Prostate gland (tissue), 2 donors: ENCODE measurements at regions of chr10 and their contacts with region 1.

Region 1: DNA sequence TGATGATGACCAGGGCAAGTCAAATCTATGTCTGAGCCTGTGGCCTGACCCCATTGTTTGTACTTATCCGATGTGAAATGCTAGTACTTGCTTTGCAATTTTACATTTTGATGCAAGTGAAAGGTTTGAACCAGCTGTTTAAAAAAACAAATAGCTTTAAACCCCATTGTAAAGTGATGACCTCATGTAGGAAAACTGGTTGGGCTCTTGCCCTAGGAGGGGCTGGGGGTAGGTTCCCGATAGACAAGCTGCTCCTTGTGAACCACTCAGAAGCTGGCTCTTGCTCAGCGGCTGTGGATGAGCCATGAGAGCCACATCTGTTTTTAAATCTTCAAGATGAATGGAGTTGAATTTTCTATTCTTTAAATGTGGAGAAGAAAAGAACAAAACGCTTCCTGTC is 185.3 kb downstream of the WDR11 start:
- DNase-seq: no peak
- H3K4me3 ChIP-seq: no peak overlapping the region
- H3K27ac ChIP-seq: no peak overlapping the region
- H3K4me1 ChIP-seq: no peaks in the 10 kb centered on the region
- H3K27me3 ChIP-seq: no peaks in the 10 kb centered on the region
- CTCF ChIP-seq: no peak
- POLR2A ChIP-seq: no peak

Region 2: DNA sequence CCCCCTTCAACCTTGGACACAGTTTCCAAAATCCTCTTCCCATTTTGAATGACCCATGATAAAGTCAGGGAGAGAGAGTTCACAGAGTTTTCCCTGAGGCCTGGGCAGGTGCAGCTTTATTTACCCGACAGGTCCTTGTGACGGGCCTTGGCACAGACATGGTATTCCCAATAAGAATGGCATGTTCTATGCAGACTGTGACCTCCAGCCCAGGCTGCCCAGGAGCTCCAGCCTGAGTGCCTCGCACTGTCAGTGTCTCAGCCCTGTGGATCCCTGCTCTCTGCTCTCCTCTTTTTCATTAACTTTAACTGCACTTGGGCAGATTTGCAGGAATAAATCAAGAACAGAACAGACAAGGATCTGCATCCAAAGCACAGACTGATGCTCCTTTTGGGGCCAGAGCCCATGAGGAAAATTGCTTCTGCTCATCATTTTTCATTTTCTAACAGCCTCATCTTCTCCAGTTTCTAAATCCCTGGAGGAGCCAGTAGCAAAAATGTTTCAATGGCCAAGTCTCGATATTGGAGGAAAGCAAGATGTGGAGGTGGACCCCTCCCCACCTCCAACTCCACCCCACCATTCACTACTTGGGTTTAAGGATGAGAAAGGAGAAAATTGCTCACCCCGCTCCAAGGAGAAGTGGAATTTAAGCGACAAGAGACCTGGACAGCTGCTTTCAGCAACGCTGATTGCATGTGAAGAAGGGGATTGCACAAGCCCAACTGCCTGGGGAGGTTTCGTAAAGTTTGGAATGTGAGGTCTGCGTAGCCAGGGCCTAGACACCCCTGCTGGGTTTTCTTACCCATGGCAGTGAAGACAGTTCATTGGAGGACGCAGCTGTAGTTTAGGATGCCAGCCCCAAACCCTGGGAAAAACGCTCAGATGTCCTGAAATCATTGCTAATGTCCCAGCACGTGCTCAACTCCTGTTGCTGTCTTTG is 40.6 kb after region 1 on chr10:
- intact Hi-C with region 1: loop called (anchors 5 kb)
- DNase-seq: peak; percentile 49
- H3K4me3 ChIP-seq: no peak overlapping the region
- H3K27ac ChIP-seq: no peak overlapping the region
- H3K4me1 ChIP-seq: no peaks in the 10 kb centered on the region
- H3K27me3 ChIP-seq: no peaks in the 10 kb centered on the region
- CTCF ChIP-seq: no peak
- POLR2A ChIP-seq: no peak